CD14-positive monocyte (primary cell): ENCODE measurements at regions of chr3 and their contacts with region 1.

Region 1: GRCh38 chr3:127544192-127544802 is 46.2 kb downstream of the TPRA1 start:
- DNase-seq: peak; percentile 38 to 65 (median 50)
- H3K4me3 ChIP-seq: no peak overlapping the region
- H3K4me3 Mint-ChIP-seq: no peak overlapping the region
- H3K27ac ChIP-seq: no peak overlapping the region
- H3K27ac Mint-ChIP-seq: no peak overlapping the region
- H3K4me1 ChIP-seq: peaks cover 7 to 10% of the 10 kb centered on the region in 2 donors
- H3K4me1 Mint-ChIP-seq: peaks cover 11% of the 10 kb centered on the region
- H3K27me3 ChIP-seq: no peaks in the 10 kb centered on the region
- H3K27me3 Mint-ChIP-seq: peaks cover 16 to 34% (median 26%) of the 10 kb centered on the region in 3 donors
- CTCF ChIP-seq: peak; percentile 91

Region 2: GRCh38 chr3:126679318-126679751 is 865.0 kb before region 1 on chr3:
- intact Hi-C with region 1: loop called (anchors 2 to 10 kb)
- DNase-seq: peak; percentile 56 to 63 (median 63)
- H3K4me3 ChIP-seq: no peak overlapping the region
- H3K4me3 Mint-ChIP-seq: peak overlapping the region; percentile 11 to 79
- H3K27ac ChIP-seq: no peak overlapping the region
- H3K27ac Mint-ChIP-seq: peak overlapping the region in 1 of 7 donors; percentile 23
- H3K4me1 ChIP-seq: peaks cover 5 to 8% of the 10 kb centered on the region in 2 donors
- H3K4me1 Mint-ChIP-seq: peaks cover 8% of the 10 kb centered on the region
- H3K27me3 ChIP-seq: peaks cover 0 to 10% of the 10 kb centered on the region in 2 donors
- H3K27me3 Mint-ChIP-seq: peaks cover 13 to 22% (median 20%) of the 10 kb centered on the region in 3 donors
- CTCF ChIP-seq: peak; percentile 97

Region 3: GRCh38 chr3:126752303-126752842 is 791.9 kb before region 1 on chr3:
- intact Hi-C with region 1: loop called in 1 of 2 experiments (anchors 10 kb)
- DNase-seq: peak; percentile 22 to 50 (median 26)
- H3K4me3 ChIP-seq: no peak overlapping the region
- H3K4me3 Mint-ChIP-seq: no peak overlapping the region
- H3K27ac ChIP-seq: no peak overlapping the region
- H3K27ac Mint-ChIP-seq: no peak overlapping the region
- H3K4me1 ChIP-seq: no peaks in the 10 kb centered on the region
- H3K4me1 Mint-ChIP-seq: no peaks in the 10 kb centered on the region
- H3K27me3 ChIP-seq: no peaks in the 10 kb centered on the region
- H3K27me3 Mint-ChIP-seq: peaks cover 0 to 2% (median 1%) of the 10 kb centered on the region in 3 donors
- CTCF ChIP-seq: peak; percentile 80